PC-9 (cell line): ENCODE measurements at regions of chr14 and their contacts with region 1.

Region 1: GRCh38 chr14:74720526-74720925 is 7.6 kb downstream of the FCF1 start:
- DNase-seq: no peak
- H3K4me3 ChIP-seq: no peak overlapping the region
- H3K27ac ChIP-seq: no peak overlapping the region
- H3K4me1 ChIP-seq: no peaks in the 10 kb centered on the region
- H3K27me3 ChIP-seq: no peaks in the 10 kb centered on the region
- CTCF ChIP-seq: no peak

Region 2: DNA sequence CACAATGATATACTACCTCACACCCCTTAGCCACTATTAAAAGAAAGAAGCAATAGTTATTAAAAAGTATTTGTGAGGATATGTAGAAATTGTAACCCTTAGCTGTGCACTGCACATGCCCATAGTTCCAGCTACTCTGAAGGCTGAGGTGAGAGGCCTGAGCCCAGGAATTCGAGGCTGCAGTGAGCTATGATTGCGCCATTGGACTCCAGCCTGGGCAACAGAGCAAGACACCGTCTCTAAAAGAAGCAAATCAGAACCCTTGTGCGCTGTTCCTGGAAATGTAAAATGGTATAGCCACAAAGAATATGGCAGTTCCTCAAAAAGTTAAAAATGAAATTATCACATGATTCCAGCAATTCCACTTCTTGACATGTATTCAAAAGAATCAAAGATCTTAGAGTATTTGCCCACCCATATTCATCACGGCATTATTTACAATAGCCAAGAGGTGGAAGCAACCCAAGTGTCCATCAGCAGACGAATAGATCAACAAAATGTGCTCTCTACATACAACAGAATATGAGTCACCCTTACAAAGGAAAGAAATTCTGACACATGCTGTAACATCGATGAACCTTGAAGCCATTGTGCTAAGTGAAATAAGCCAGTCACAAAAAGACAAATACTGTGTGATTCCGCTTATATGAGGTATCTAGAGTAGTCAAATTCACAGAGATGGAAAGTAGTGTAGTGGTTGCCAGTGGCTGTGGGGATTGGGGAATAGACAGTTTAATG is 18.9 kb after region 1 on chr14:
- CTCF ChIA-PET with region 1: interaction called, 3 read pairs
- POLR2A ChIA-PET with region 1: interaction called, 31 read pairs
- intact Hi-C with region 1: no loop called
- DNase-seq: no peak
- H3K4me3 ChIP-seq: no peak overlapping the region
- H3K27ac ChIP-seq: no peak overlapping the region
- H3K4me1 ChIP-seq: no peaks in the 10 kb centered on the region
- H3K27me3 ChIP-seq: no peaks in the 10 kb centered on the region
- CTCF ChIP-seq: no peak